Heart left ventricle (tissue), 16 donors: ENCODE measurements at regions of chr7 and their contacts with region 1.

Region 1: GRCh38 chr7:123534383-123535260 is at the start of gene IQUB:
- DNase-seq: peak; percentile 98 to 99 (median 99)
- ATAC-seq: peak; percentile 95 to 97 (median 96)
- H3K4me3 ChIP-seq: peak within 1 kb of the TSS; percentile 19 to 68 (median 62)
- H3K27ac ChIP-seq: peak within 1 kb of the TSS in 11 of 12 donors; percentile 77 to 92 (median 85)
- H3K4me1 ChIP-seq: peaks cover 0 to 18% (median 10%) of the 10 kb centered on the region in 12 donors
- H3K27me3 ChIP-seq: peaks cover 0 to 4% (median 0%) of the 10 kb centered on the region in 9 donors
- CTCF ChIP-seq: no peak
- POLR2A ChIP-seq: peak in 1 of 2 donors; percentile 14
- total RNA-seq, gene IQUB: 0.24 to 1.3 (median 0.63) TPM

Region 2: GRCh38 chr7:123338688-123339087 is 195.9 kb before region 1 on chr7:
- intact Hi-C with region 1: no loop called
- DNase-seq: no peak
- ATAC-seq: no peak
- H3K4me3 ChIP-seq: no peak overlapping the region
- H3K27ac ChIP-seq: no peak overlapping the region
- H3K4me1 ChIP-seq: no peaks in the 10 kb centered on the region
- H3K27me3 ChIP-seq: no peaks in the 10 kb centered on the region
- CTCF ChIP-seq: no peak
- POLR2A ChIP-seq: no peak

Region 3: GRCh38 chr7:123494193-123494796 is 40.3 kb before region 1 on chr7:
- intact Hi-C with region 1: loop called in 7 of 10 experiments (anchors 2 to 5 kb)
- DNase-seq: no peak
- ATAC-seq: no peak
- H3K4me3 ChIP-seq: no peak overlapping the region
- H3K27ac ChIP-seq: no peak overlapping the region
- H3K4me1 ChIP-seq: peaks cover 0 to 2% (median 0%) of the 10 kb centered on the region in 12 donors
- H3K27me3 ChIP-seq: peaks cover 0 to 4% (median 0%) of the 10 kb centered on the region in 9 donors
- CTCF ChIP-seq: peak; percentile 67 to 89 (median 80)
- POLR2A ChIP-seq: no peak

Region 4: DNA sequence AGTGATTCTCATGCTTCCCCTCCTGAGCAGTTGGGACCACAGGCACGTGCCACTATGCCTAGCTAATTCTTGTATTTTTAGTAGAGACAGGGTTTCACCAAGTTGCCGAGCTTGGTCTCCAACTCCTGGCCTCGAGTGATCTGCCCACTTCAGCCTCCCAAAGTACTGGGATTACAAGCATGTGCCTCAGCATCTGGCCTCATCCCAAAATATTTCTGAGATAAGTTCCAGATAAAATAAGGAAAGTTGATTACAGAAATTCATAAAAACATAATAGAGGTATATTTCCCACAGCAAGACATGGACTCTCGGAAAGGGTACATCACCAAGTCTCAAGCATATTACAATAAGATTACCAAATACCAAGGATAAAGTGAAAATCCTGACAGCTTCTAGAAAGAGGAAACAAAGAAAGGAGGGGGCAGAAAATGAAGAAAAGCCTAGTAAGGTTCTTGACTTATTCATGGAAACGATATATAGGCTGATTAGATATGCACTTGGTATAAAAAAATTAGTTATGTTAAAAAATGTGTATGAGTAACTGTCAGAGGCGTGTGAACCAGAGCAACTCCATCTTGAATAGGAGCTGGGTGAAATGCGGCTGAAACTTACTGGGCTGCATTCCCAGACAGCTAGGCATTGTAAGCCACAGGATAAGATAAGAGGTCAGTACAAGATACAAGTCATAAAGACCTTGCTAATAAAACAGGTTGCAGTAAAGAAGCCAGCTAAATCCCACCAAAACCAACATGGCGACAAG is 35.2 kb before region 1 on chr7:
- intact Hi-C with region 1: loop called in 7 of 10 experiments (anchors 2 to 5 kb)
- DNase-seq: no peak
- ATAC-seq: no peak
- H3K4me3 ChIP-seq: no peak overlapping the region
- H3K27ac ChIP-seq: no peak overlapping the region
- H3K4me1 ChIP-seq: no peaks in the 10 kb centered on the region
- H3K27me3 ChIP-seq: peaks cover 0 to 4% (median 0%) of the 10 kb centered on the region in 9 donors
- CTCF ChIP-seq: no peak
- POLR2A ChIP-seq: no peak

Region 5: GRCh38 chr7:123557398-123558288 is 23.0 kb after region 1 on chr7 and contains the start of gene NDUFA5:
- intact Hi-C with region 1: loop called in 4 of 10 experiments (anchors 1 to 2 kb)
- DNase-seq: peak; percentile 94 to 99 (median 99)
- ATAC-seq: peak; percentile 98 to 99 (median 99)
- H3K4me3 ChIP-seq: peak within 1 kb of the TSS; percentile 59 to 95 (median 78)
- H3K27ac ChIP-seq: peak within 1 kb of the TSS; percentile 84 to 97 (median 92)
- H3K4me1 ChIP-seq: peaks cover 6 to 43% (median 36%) of the 10 kb centered on the region in 12 donors
- H3K27me3 ChIP-seq: no peaks in the 10 kb centered on the region
- CTCF ChIP-seq: no peak
- POLR2A ChIP-seq: peak in 1 of 2 donors; percentile 72
- total RNA-seq, gene NDUFA5: 109 to 332 (median 245) TPM